H1 (cell line): ENCODE measurements at regions of chr7 and their contacts with region 1.

Region 1: DNA sequence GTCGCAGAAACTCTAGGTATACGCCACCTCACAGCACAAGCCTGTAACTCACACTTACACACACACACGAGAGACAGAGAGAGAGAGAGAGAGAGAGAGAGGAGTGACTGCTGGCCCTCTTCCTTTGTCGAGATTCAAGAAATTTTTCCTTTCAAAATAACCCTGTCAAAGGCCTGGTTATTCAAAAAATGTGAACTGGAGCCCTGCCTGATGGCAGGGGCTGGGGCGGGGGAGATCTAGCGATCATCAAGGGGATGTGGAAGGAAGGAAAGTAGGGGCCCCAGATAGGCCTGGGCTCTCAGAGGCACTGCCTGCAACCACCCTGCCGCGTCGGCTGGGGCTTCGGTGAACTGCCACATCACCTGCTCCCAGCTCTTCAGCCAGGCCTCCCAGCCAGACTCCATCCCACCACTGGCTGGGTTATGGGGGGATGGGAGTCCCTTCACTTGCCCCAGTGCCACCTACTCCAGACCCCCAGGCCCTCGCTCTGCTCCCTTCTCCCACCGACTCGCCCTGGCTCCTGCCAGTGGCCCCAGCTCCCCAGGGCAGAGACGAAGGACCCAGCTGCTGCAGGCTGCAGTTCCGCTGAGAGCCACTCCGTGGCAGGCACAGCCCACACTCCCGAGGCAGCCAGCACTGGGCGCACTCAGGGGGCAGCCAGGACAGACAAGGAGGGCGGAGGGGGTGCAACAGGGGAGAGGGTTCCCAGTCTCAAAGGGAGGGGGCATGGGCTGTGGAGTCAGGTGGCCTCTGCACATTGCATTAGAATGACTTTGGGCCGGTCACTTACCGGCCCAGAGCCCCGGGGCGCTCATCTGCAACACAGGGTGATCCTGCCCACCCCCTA is 15.3 kb downstream of the KCNH2 start:
- DNase-seq: peak in 1 of 2 experiments; percentile 83
- H3K4me3 ChIP-seq: no peak overlapping the region
- H3K27ac ChIP-seq: no peak overlapping the region
- H3K4me1 ChIP-seq: peaks cover 0 to 4% (median 3%) of the 10 kb centered on the region in 4 experiments; a peak in 3 of 7 replicates
- H3K27me3 ChIP-seq: peaks cover 0 to 21% (median 9%) of the 10 kb centered on the region in 4 experiments; a peak in 5 of 7 replicates
- CTCF ChIP-seq: peak in 2 of 3 experiments; percentile 97 to 98; a peak in 3 of 4 replicates
- EP300 ChIP-seq: no peak
- POLR2A ChIP-seq: no peak
- RAD21 ChIP-seq: peak; percentile 97 to 99

Region 2: DNA sequence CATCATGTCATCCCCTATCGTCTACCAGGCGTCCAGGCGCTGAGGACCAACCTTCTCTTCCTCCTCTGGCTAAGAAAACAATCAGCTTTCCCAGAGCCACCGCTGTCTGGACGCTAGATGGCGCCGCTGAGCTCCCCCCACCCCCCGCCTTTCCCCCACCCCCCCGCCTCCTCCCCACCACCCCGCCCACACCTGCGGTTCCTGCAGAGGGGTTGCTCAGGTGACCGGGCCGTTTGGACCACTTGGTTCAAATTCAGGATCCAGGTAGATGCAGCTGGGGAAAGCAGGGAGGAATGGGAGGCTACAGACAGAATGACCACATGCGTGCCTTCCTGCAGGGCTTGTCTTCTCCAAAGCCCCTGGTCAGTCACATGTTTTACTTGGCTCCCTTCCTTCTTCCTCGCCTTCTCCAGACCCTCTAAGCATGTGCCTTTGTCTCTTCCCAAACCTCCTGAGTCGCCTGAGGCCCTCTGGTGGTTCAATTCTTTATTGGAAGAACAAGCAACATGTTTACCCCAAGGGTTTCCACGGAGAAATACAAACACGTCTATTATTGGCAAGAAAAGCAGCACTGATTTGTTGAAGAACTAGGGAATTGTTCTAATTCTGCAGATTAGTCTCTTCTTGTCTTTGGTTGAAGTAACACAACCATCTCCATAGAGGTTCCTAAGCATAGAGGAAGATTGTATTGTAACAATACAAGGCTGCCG is 85.8 kb before region 1 on chr7:
- CTCF ChIA-PET with region 1: interaction called, 16 read pairs
- POLR2A ChIA-PET with region 1: no interaction called
- DNase-seq: peak; percentile 62 to 79
- H3K4me3 ChIP-seq: peak overlapping the region; percentile 6 to 52 (median 29); a peak in 6 of 8 replicates
- H3K27ac ChIP-seq: peak overlapping the region; percentile 91; the same call in 1 of the 2 replicates
- H3K4me1 ChIP-seq: 0 out of 7 replicates have a peak, but pooled peaks cover 0 to 7% (median 0%) of the 10 kb centered on the region in 4 experiments
- H3K27me3 ChIP-seq: no peaks in the 10 kb centered on the region; a peak in 1 of 7 replicates
- CTCF ChIP-seq: peak; percentile 66 to 78 (median 72)
- EP300 ChIP-seq: 0 out of 3 replicates have a peak, but pooled peaks of 1 of the 2 experiments have one; percentile 46
- POLR2A ChIP-seq: peak; percentile 50 to 81
- RAD21 ChIP-seq: peak; percentile 58 to 59

Region 3: GRCh38 chr7:150909200-150909995 is 53.4 kb before region 1 on chr7:
- CTCF ChIA-PET with region 1: interaction called, 12 read pairs
- POLR2A ChIA-PET with region 1: interaction called, 3 read pairs
- DNase-seq: no peak
- H3K4me3 ChIP-seq: no peak overlapping the region
- H3K27ac ChIP-seq: no peak overlapping the region
- H3K4me1 ChIP-seq: peaks cover 0 to 8% (median 0%) of the 10 kb centered on the region in 4 experiments; a peak in 2 of 7 replicates
- H3K27me3 ChIP-seq: no peaks in the 10 kb centered on the region; a peak in 1 of 7 replicates
- CTCF ChIP-seq: no peak
- EP300 ChIP-seq: no peak
- POLR2A ChIP-seq: no peak
- RAD21 ChIP-seq: no peak

Region 4: GRCh38 chr7:150941981-150942590 is 20.7 kb before region 1 on chr7:
- CTCF ChIA-PET with region 1: interaction called, 45 read pairs
- POLR2A ChIA-PET with region 1: no interaction called
- DNase-seq: no peak
- H3K4me3 ChIP-seq: no peak overlapping the region
- H3K27ac ChIP-seq: no peak overlapping the region
- H3K4me1 ChIP-seq: peaks cover 0 to 24% (median 12%) of the 10 kb centered on the region in 4 experiments; a peak in 6 of 7 replicates
- H3K27me3 ChIP-seq: peaks cover 0 to 9% (median 4%) of the 10 kb centered on the region in 4 experiments; a peak in 2 of 7 replicates
- CTCF ChIP-seq: no peak
- EP300 ChIP-seq: no peak
- POLR2A ChIP-seq: no peak
- RAD21 ChIP-seq: no peak

Region 5: DNA sequence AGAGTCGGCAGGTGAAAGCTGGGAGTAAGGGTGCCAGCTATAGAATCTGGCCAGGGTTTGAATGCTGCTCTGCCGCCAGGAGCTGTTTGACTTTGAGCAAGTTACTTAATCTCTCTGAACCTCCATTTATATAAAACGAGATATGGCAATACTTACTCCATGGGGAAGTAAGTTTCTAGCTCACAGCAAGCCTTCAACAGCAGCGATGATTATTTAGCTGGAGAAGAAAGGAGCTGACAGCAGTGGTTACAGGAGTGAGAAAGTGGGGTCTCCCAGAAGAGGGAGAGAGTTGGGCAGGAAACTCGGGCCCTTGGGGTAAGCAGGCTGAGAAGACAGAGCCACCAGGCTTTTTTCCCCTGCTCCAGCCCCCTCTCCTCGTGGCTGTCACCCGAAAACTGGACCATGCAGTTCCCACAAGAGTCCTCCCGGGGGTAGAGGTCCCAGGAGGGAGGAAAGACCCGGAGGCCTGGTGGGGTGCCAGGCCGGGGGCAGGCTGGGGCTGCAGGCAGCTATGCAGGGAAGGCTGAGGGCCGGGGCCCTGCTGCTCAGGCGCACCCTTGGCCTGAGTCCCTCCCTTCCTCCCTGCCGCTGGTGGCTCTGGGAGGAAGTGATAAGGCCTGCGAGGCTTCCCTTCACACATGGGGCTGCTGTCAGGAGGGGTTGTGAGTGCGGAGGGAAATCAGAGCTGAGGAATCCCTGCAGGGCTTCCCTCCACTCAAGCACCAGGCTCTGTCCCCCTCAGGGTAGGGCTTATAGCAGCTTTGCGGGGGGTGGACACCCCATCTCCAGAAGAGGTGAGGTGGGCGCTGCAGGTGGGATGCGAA is 31.6 kb after region 1 on chr7:
- CTCF ChIA-PET with region 1: interaction called, 127 read pairs
- POLR2A ChIA-PET with region 1: interaction called, 3 read pairs
- DNase-seq: no peak
- H3K4me3 ChIP-seq: no peak overlapping the region
- H3K27ac ChIP-seq: no peak overlapping the region
- H3K4me1 ChIP-seq: peaks cover 4 to 23% (median 14%) of the 10 kb centered on the region in 4 experiments
- H3K27me3 ChIP-seq: no peaks in the 10 kb centered on the region
- CTCF ChIP-seq: no peak
- EP300 ChIP-seq: no peak
- POLR2A ChIP-seq: no peak
- RAD21 ChIP-seq: no peak

Region 6: GRCh38 chr7:151110941-151111645 is 148.3 kb after region 1 on chr7:
- CTCF ChIA-PET with region 1: interaction called, 19 read pairs
- POLR2A ChIA-PET with region 1: no interaction called
- DNase-seq: peak in 1 of 2 experiments; percentile 91
- H3K4me3 ChIP-seq: no peak overlapping the region
- H3K27ac ChIP-seq: no peak overlapping the region
- H3K4me1 ChIP-seq: peaks cover 0 to 21% (median 15%) of the 10 kb centered on the region in 4 experiments; a peak in 6 of 7 replicates
- H3K27me3 ChIP-seq: peaks cover 0 to 11% (median 7%) of the 10 kb centered on the region in 4 experiments; a peak in 3 of 7 replicates
- CTCF ChIP-seq: peak in 2 of 3 experiments; percentile 95 to 96; a peak in 3 of 4 replicates
- EP300 ChIP-seq: no peak
- POLR2A ChIP-seq: no peak
- RAD21 ChIP-seq: peak; percentile 92 to 93